MCF 10A (cell line): ENCODE measurements at regions of chr5 and their contacts with region 1.

Region 1: GRCh38 chr5:115607935-115608334 is 5.7 kb upstream of the TICAM2 start:
- DNase-seq: no peak
- H3K4me3 Mint-ChIP-seq: no peak overlapping the region
- H3K27ac Mint-ChIP-seq: no peak overlapping the region
- H3K4me1 Mint-ChIP-seq: peaks cover 11% of the 10 kb centered on the region
- H3K27me3 Mint-ChIP-seq: no peaks in the 10 kb centered on the region
- CTCF ChIP-seq: no peak

Region 2: DNA sequence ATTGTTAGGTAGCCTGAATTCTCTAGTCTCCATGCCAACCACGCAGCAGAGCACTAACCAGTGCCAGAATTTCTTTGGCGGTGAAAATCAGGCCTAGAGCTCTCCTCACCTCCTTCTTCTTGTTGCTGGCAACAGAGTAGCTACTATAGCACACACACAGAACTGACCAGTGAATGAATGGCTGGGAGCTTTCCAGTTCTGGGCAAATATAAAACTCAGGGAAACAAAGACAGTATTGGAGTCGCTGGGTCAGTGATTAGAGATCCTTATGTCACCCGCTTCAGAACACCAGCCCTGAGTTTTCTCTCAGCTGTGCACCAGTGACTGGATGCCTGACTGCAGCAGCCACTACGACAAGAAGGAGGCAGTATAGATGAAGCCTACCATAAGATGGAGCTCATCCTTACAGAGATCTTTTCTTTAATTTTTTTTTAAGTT is 36.5 kb before region 1 on chr5:
- CTCF ChIA-PET with region 1: no interaction called
- POLR2A ChIA-PET with region 1: no interaction called
- intact Hi-C with region 1: no loop called
- DNase-seq: no peak
- H3K4me3 Mint-ChIP-seq: no peak overlapping the region
- H3K27ac Mint-ChIP-seq: no peak overlapping the region
- H3K4me1 Mint-ChIP-seq: peaks cover 16% of the 10 kb centered on the region
- H3K27me3 Mint-ChIP-seq: no peaks in the 10 kb centered on the region
- CTCF ChIP-seq: no peak

Region 3: GRCh38 chr5:115625579-115626444 is 17.9 kb after region 1 on chr5 and contains the start of gene TMED7:
- CTCF ChIA-PET with region 1: interaction called, 3 read pairs
- POLR2A ChIA-PET with region 1: interaction called, 10 read pairs
- intact Hi-C with region 1: no loop called
- DNase-seq: peak; percentile 98
- H3K4me3 Mint-ChIP-seq: no peak within 1 kb of the TSS
- H3K27ac Mint-ChIP-seq: no peak within 1 kb of the TSS
- H3K4me1 Mint-ChIP-seq: peaks cover 5% of the 10 kb centered on the region
- H3K27me3 Mint-ChIP-seq: no peaks in the 10 kb centered on the region
- CTCF ChIP-seq: no peak
- total RNA-seq, gene TMED7: 96.1 and 115 TPM in 2 replicates